Left cardiac atrium (tissue), 4 donors: ENCODE measurements at regions of chr21 and their contacts with region 1.

Region 1: DNA sequence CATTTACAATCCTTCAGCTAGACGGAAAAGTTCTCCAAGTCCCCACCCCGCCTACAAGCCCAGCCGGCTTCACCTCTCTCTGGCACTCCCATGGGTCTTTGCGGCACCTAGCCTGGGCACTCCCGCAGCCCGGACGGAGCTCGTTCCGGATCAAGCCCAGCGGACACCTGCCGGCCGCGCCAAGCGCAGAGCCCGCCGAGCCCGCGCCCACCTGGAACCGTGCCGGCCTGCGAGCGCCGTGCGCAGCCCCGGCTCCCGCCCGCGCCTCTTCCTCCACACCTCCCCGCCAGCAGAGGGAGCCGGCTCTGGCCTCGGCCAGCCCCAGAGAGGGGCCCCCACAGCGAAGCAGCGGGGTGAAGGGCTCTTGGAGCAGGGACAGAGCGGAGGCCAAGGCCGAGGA is 50.0 kb upstream of the KRTAP19-8 start:
- DNase-seq: no peak
- ATAC-seq: no peak

Region 2: DNA sequence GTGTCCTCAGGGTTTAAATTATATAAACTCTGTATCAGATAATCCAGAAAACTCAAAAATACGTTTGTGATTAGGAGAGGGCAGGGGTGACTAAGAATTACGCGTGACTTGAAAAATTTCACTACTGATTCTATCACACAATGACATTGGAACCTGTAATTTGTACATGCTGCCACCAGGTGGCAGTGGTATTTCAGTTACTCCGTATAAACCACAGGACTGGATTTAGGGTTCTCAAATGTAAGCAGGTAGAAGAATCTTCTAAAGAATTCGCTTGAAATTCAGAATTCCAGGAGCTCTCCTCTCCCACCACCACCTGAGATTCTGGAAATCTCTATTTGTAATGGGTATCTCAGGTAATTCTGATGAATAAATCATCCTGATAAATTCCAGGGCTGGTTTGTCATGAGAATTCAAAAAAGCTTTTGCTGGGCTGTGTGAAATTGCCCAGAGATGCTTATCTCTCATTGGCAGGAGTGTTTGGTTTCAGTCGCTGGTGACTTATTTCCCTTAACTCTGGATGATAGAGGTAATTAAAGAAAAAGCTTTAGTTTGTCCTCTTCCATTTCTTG is 257.0 kb before region 1 on chr21:
- intact Hi-C with region 1: loop called (anchors 5 kb)
- DNase-seq: no peak
- ATAC-seq: no peak

Region 3: DNA sequence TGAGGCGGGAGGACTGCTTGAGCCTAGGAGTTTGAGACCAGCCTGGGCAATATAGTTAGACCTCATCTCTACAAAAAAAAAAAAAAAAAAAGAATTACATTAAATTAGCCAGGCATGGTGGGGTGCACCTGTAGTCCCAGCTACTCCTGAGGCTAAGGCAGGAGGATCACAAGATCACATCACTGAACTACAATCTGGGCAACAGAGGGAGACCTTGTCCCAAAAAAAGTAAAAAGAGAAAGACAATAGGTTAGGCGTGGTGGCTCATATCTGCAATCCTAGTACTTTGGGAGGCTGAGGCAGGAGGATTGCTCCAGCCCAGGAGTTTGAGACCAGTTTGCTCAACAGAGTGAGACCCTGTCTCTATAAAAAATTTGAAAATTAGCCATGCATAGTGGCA is 125.5 kb after region 1 on chr21:
- intact Hi-C with region 1: no loop called
- DNase-seq: no peak
- ATAC-seq: no peak